A549 (cell line): ENCODE measurements at regions of chr19 and their contacts with region 1.

Region 1: DNA sequence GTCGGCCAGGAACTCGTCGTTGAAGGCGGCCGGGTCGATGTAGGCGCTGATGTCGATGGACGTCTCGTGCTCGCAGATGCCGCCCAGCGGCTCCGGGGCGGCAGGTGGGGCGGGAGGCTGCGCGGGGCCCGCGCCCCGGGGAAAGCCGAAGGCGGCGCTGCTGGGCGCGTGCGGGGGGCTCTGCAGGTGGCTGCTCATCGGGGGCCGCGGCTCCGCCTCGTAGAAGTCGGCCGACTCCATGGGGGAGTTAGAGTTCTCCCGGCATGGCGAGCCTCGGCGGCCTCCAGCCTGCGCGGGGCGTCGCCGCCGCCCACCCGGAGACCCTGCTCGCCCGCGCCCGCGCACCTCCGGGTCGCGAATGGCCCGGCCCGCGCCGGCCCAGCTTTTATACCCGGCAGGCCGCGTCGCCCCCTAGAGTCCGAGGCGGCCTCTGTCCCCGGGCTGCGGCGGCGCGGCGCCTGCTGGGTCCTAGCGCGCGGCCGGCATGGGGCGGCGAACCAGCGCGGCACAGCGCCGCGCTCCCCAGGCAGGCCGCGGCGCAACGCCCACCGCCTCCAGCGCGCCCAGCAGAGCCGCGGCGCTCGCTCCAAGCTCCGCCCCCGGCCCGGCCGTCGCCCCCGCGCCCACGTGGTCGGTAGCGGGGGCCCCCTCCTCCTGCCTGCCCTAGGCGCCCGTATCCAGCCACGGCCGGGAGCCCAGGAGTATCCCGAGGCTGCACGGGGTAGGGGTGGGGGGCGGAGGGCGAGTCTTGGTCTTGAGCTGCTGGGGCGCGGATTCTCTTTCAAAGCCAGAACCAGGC is at the start of gene CEBPA:
- DNase-seq: peak; percentile 93 to 95
- ATAC-seq: peak; percentile 83 to 92
- H3K4me3 ChIP-seq: peak within 1 kb of the TSS; percentile 63
- H3K27ac ChIP-seq: peak within 1 kb of the TSS; percentile 86 to 93
- H3K4me1 ChIP-seq: peaks cover 11% of the 10 kb centered on the region
- CTCF ChIP-seq: peak; percentile 99
- EP300 ChIP-seq: no peak
- POLR2A ChIP-seq: peak; percentile 100
- RAD21 ChIP-seq: no peak; a peak in 3 of 5 replicates
- polyA plus RNA-seq, gene CEBPA: 3.5 and 4.3 TPM in 2 replicates

Region 2: DNA sequence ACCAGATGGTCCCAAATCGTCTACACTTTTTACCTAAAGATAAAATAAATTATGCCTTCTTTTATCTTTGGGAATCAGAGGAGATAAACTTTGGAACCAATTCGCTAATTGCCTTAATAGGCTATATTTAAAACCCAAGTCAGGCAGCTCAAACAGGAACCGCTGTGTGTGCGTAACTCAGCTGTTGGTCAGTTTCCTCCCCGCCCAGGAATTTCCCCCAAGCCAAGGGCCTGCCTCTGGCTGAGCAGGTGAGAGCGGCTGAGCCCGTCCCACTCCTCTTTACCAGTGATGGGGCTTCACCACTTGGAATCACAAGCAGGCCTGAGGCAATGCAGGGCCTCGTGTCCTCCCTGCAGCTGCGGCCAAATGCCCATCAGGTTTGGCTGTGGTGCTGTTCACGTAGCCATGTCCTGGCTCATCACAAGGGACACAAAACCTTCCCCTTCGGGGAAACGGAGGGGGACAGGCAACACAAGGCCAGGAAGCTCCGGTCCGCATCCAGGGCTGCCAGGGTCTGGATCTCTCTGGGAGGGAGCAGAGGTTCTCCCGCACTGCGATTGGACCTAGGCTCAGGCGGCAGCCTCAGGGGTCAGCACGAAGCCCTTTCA is 432.3 kb before region 1 on chr19:
- CTCF ChIA-PET with region 1: no interaction called
- POLR2A ChIA-PET with region 1: no interaction called
- DNase-seq: no peak
- ATAC-seq: no peak; a peak in 1 of 6 replicates
- H3K4me3 ChIP-seq: no peak overlapping the region
- H3K27ac ChIP-seq: no peak overlapping the region
- H3K4me1 ChIP-seq: no peaks in the 10 kb centered on the region
- CTCF ChIP-seq: no peak
- EP300 ChIP-seq: no peak
- POLR2A ChIP-seq: no peak
- RAD21 ChIP-seq: no peak

Region 3: GRCh38 chr19:33241530-33242101 is 60.8 kb before region 1 on chr19:
- CTCF ChIA-PET with region 1: interaction called, 603 read pairs
- POLR2A ChIA-PET with region 1: interaction called, 10 read pairs
- DNase-seq: peak in 1 of 2 experiments; percentile 45
- ATAC-seq: peak; percentile 22 to 73; a peak in 4 of 6 replicates
- H3K4me3 ChIP-seq: no peak overlapping the region
- H3K27ac ChIP-seq: peak overlapping the region in 1 of 2 experiments; percentile 46; a peak in 3 of 6 replicates
- H3K4me1 ChIP-seq: 0 out of 3 replicates have a peak, but pooled peaks cover 3% of the 10 kb centered on the region
- CTCF ChIP-seq: peak; percentile 98
- EP300 ChIP-seq: no peak
- POLR2A ChIP-seq: no peak
- RAD21 ChIP-seq: peak; percentile 97 to 100

Region 4: GRCh38 chr19:33268162-33268991 is 34.0 kb before region 1 on chr19:
- CTCF ChIA-PET with region 1: interaction called, 14 read pairs
- POLR2A ChIA-PET with region 1: interaction called, 6 read pairs
- DNase-seq: no peak
- ATAC-seq: peak in 1 of 2 experiments; percentile 4; a peak in 3 of 6 replicates
- H3K4me3 ChIP-seq: no peak overlapping the region
- H3K27ac ChIP-seq: no peak overlapping the region; a peak in 1 of 6 replicates
- H3K4me1 ChIP-seq: peaks cover under 1% of the 10 kb centered on the region; the same call in 1 of the 3 replicates
- CTCF ChIP-seq: no peak
- EP300 ChIP-seq: no peak
- POLR2A ChIP-seq: no peak
- RAD21 ChIP-seq: no peak

Region 5: DNA sequence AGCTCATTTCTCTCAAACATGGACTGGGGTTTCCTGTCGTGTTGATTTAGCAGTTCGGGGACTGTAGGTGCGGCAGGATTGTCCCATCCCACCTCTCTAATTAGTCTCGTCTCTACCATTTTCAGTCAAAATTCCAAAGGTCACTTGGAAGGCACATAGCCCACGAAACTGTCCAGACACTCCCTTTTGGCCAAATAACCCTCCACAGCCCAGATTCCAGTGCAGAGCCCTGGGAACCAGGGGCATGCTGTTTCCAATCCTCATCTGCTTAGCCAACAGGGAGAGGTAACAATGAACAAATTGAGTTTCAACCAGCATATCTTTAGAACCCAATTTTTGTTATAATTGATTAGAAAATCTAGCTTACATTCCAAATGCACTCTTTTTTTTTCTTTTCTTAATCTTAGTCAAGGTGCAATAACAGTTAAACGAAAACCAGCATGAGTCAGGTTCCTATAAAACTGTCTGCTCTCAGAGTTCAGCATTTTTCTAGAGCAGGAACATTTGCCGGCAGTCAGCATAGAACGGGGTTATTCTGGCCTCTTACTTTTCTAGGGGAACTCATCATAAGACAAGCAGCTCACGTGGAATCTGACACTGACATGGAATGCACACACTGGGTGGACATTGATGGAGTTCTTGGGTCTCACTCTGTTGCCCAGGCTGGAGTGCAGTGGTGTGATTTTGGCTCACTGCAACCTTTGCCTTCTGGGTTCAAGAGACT is 14.3 kb after region 1 on chr19:
- CTCF ChIA-PET with region 1: interaction called, 115 read pairs
- POLR2A ChIA-PET with region 1: interaction called, 18 read pairs
- DNase-seq: peak in 1 of 2 experiments; percentile 64
- ATAC-seq: peak; percentile 88 to 92
- H3K4me3 ChIP-seq: no peak overlapping the region
- H3K27ac ChIP-seq: peak overlapping the region; percentile 39 to 68
- H3K4me1 ChIP-seq: peaks cover 23% of the 10 kb centered on the region
- CTCF ChIP-seq: no peak
- EP300 ChIP-seq: 0 out of 5 replicates have a peak, but pooled peaks of 1 of the 2 experiments have one; percentile 19
- POLR2A ChIP-seq: no peak
- RAD21 ChIP-seq: no peak; a peak in 1 of 5 replicates

Region 6: GRCh38 chr19:33373701-33374421 is 71.5 kb after region 1 on chr19 and contains the start of gene CEBPG:
- CTCF ChIA-PET with region 1: interaction called, 57 read pairs
- POLR2A ChIA-PET with region 1: interaction called, 160 read pairs
- DNase-seq: peak in 1 of 2 experiments; percentile 93
- ATAC-seq: peak; percentile 29 to 75
- H3K4me3 ChIP-seq: peak within 1 kb of the TSS; percentile 65
- H3K27ac ChIP-seq: peak within 1 kb of the TSS; percentile 92 to 95
- H3K4me1 ChIP-seq: peaks cover 37% of the 10 kb centered on the region
- CTCF ChIP-seq: peak; percentile 43
- EP300 ChIP-seq: peak in 1 of 2 experiments; percentile 67; a peak in 2 of 5 replicates
- POLR2A ChIP-seq: peak; percentile 73
- RAD21 ChIP-seq: no peak
- polyA plus RNA-seq, gene CEBPG: 104 and 138 TPM in 2 replicates

Region 7: GRCh38 chr19:33416307-33417215 is 114.2 kb after region 1 on chr19:
- CTCF ChIA-PET with region 1: interaction called, 30 read pairs
- POLR2A ChIA-PET with region 1: interaction called, 3 read pairs
- DNase-seq: peak; percentile 84 to 99
- ATAC-seq: peak; percentile 64 to 92
- H3K4me3 ChIP-seq: no peak overlapping the region
- H3K27ac ChIP-seq: no peak overlapping the region
- H3K4me1 ChIP-seq: no peaks in the 10 kb centered on the region
- CTCF ChIP-seq: peak; percentile 98
- EP300 ChIP-seq: no peak
- POLR2A ChIP-seq: no peak
- RAD21 ChIP-seq: peak; percentile 85 to 91